ENCODE measurements at regions of chr16 and their contacts with region 1.

Region 1: DNA sequence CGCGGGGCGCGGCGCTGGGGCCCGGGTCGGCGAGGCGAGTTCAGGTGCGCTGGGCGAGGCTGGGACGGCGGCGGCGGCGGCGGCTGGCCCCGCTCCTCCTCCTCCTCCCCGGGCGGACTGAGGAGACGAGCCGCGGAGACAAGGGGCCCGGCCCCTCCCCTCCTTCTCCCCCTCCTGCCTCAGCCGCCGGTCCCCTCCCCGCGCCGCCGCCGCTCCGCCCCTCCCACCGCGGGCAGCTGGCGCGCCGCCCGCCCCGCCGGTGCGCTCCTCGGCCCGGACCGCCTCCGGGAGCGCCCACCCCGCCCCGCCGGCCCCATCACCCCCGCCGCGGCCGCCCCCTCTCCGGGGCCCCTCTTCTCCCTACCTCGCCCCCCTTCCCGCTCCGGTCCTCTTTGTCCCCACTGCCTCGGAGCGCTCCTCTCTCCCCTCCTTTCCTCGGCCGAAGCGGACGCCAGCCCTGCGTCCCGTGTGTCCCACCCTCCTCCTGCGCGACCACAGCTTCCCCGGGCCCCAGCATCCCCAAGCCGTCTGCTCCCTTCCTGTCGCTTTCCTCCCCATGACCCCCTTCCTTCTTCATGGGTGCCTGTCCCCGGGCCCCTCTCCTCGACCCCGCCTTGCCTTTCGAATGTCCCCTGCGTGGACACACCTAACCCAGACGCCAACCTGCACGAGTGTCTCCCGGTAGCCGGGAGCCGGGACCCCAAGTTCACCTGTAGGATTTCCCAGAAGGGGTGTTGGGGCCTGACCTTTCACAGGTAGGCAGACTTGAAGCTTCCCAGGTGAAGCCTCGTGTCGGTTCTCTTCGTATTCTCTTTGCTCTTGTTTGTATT is at the start of gene TOX3:
- DNase-seq: peak; percentile 46
- H3K4me3 ChIP-seq: peak within 1 kb of the TSS; percentile 66
- H3K27ac ChIP-seq: peak within 1 kb of the TSS; percentile 58
- H3K4me1 ChIP-seq: peaks cover 3% of the 10 kb centered on the region
- H3K27me3 ChIP-seq: peaks cover 68% of the 10 kb centered on the region
- CTCF ChIP-seq: no peak
- total RNA-seq, gene TOX3: 16.6 and 17.6 TPM in 2 replicates

Region 2: DNA sequence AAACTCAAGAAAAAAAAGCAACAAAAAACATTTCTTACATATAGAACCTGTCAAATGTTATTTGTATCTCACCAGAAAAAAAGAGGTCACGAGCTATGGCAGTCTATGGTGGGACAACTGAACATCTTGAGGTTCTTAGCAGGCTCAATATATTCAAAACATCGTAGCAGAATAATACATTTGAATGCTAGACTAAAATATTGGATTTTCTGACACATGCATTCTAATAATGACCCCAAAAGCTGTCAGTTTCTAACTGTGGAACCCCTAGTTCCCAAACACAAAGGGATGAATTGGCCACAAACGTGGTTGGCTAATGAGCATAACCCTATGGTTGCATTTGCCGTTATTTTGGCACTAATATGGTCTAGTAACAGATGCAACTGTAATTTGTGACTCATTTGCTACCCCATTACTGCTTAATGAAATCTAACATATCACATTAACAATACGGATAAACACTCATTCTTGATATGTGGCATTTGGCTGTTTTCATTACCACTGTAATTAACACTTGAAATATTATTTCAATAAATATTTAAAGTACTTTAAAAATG is 81.4 kb before region 1 on chr16:
- CTCF ChIA-PET with region 1: interaction called, 10 read pairs
- POLR2A ChIA-PET with region 1: no interaction called
- intact Hi-C with region 1: no loop called
- DNase-seq: no peak
- H3K4me3 ChIP-seq: no peak overlapping the region
- H3K27ac ChIP-seq: no peak overlapping the region
- H3K4me1 ChIP-seq: peaks cover 56% of the 10 kb centered on the region
- H3K27me3 ChIP-seq: no peaks in the 10 kb centered on the region
- CTCF ChIP-seq: no peak

Region 3: DNA sequence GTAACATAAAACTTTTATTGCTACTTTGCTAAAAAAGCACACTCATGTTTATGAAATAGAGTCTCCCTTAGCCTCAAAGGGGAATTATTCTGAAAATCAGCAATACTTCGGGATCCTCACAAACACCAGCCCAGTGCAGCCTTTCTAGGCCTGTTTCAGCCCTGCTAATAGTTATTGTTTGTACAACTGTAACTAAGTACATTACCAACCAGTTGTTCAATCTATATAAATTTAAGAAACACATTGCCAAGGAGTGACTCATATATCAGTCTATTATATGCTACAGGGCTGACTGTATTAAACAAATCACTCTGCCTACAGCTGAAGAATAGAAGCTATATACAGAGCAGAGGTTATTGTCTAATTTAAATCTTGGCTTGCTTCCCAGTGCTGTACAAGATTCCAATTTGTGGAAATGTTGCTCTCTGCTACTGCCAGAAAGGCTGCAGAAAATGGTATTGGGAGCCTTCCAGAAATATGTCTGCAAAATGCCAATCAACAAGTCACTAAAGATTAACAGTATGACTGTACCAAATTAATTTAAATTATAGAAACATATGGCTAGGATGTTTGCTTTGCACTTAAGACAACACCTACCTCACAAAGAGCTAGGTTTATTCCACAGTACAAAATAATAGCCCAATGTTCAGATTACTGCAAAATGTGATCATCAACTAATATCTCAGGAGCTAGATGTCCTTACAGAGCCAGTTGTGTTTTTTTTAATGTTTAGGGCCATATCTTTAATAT is 50.0 kb before region 1 on chr16:
- CTCF ChIA-PET with region 1: interaction called, 4 read pairs
- POLR2A ChIA-PET with region 1: no interaction called
- intact Hi-C with region 1: loop called (anchors 2 kb)
- DNase-seq: peak; percentile 94
- H3K4me3 ChIP-seq: no peak overlapping the region
- H3K27ac ChIP-seq: peak overlapping the region; percentile 78
- H3K4me1 ChIP-seq: peaks cover 61% of the 10 kb centered on the region
- H3K27me3 ChIP-seq: peaks cover 3% of the 10 kb centered on the region
- CTCF ChIP-seq: no peak

Region 4: DNA sequence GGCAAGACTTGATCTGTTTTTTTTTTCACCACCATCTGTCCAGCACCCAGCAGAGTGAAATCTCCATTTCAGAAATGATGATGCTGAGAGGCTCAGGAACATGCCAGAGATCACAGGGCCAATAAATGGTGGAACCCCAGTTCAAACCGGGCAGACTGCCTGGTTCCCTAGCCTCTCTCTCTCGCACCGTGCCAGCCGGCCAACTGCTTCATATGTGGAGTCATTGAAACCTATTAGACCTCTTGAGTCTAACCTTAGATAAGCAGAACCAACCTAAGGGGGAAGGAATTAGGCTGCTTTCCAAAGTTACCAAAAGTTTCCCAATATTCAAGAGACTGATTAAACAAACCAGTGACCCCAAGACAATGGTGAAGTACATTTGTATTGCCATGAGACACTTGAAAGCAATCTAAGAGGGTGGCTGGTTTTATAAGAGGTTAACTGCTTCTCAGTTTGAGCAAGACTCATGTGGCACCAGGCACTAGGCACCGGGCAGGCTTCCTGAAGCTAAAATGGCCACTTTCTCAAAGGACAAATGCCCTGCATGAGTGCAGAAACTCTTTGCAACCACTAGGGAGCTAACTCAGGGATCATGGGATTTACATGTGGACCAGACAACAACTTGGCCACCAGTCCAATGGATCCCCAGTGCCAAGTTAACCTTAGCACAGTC is 18.7 kb before region 1 on chr16:
- CTCF ChIA-PET with region 1: interaction called, 10 read pairs
- POLR2A ChIA-PET with region 1: no interaction called
- intact Hi-C with region 1: no loop called
- DNase-seq: no peak
- H3K4me3 ChIP-seq: no peak overlapping the region
- H3K27ac ChIP-seq: no peak overlapping the region
- H3K4me1 ChIP-seq: peaks cover 3% of the 10 kb centered on the region
- H3K27me3 ChIP-seq: peaks cover 14% of the 10 kb centered on the region
- CTCF ChIP-seq: no peak